Heart left ventricle (tissue), 16 donors: ENCODE measurements at regions of chr22 and their contacts with region 1.

Region 1: GRCh38 chr22:42347281-42347824 is 76.9 kb upstream of the TCF20 start:
- DNase-seq: no peak
- ATAC-seq: no peak
- H3K4me3 ChIP-seq: no peak overlapping the region
- H3K27ac ChIP-seq: no peak overlapping the region
- H3K4me1 ChIP-seq: peaks cover 0 to 9% (median 2%) of the 10 kb centered on the region in 12 donors
- H3K27me3 ChIP-seq: peaks cover 0 to 13% (median 0%) of the 10 kb centered on the region in 9 donors
- CTCF ChIP-seq: no peak
- POLR2A ChIP-seq: no peak

Region 2: GRCh38 chr22:42114721-42115120 is 232.6 kb before region 1 on chr22:
- intact Hi-C with region 1: no loop called
- DNase-seq: no peak
- ATAC-seq: no peak
- H3K4me3 ChIP-seq: no peak overlapping the region
- H3K27ac ChIP-seq: no peak overlapping the region
- H3K4me1 ChIP-seq: no peaks in the 10 kb centered on the region
- H3K27me3 ChIP-seq: no peaks in the 10 kb centered on the region
- CTCF ChIP-seq: peak in 8 of 12 donors; percentile 12 to 39 (median 20)
- POLR2A ChIP-seq: no peak

Region 3: GRCh38 chr22:42169055-42169469 is 178.3 kb before region 1 on chr22:
- intact Hi-C with region 1: no loop called
- DNase-seq: peak; percentile 44 to 75 (median 68)
- ATAC-seq: peak in 3 of 4 donors; percentile 78 to 84 (median 84)
- H3K4me3 ChIP-seq: no peak overlapping the region
- H3K27ac ChIP-seq: no peak overlapping the region
- H3K4me1 ChIP-seq: peaks cover 0 to 15% (median 0%) of the 10 kb centered on the region in 12 donors
- H3K27me3 ChIP-seq: no peaks in the 10 kb centered on the region
- CTCF ChIP-seq: peak; percentile 70 to 98 (median 84)
- POLR2A ChIP-seq: no peak

Region 4: GRCh38 chr22:42296381-42296853 is 50.9 kb before region 1 on chr22:
- intact Hi-C with region 1: loop called in 1 of 10 experiments (anchors 5 kb)
- DNase-seq: peak; percentile 45 to 79 (median 62)
- ATAC-seq: peak in 3 of 4 donors; percentile 11 to 54 (median 11)
- H3K4me3 ChIP-seq: no peak overlapping the region
- H3K27ac ChIP-seq: no peak overlapping the region
- H3K4me1 ChIP-seq: peaks cover 0 to 20% (median 3%) of the 10 kb centered on the region in 12 donors
- H3K27me3 ChIP-seq: no peaks in the 10 kb centered on the region
- CTCF ChIP-seq: peak in 2 of 12 donors; percentile 16 to 33
- POLR2A ChIP-seq: no peak